Right ventricle myocardium inferior (tissue), 1 donor: ENCODE measurements at regions of chr2 and their contacts with region 1.

Region 1: DNA sequence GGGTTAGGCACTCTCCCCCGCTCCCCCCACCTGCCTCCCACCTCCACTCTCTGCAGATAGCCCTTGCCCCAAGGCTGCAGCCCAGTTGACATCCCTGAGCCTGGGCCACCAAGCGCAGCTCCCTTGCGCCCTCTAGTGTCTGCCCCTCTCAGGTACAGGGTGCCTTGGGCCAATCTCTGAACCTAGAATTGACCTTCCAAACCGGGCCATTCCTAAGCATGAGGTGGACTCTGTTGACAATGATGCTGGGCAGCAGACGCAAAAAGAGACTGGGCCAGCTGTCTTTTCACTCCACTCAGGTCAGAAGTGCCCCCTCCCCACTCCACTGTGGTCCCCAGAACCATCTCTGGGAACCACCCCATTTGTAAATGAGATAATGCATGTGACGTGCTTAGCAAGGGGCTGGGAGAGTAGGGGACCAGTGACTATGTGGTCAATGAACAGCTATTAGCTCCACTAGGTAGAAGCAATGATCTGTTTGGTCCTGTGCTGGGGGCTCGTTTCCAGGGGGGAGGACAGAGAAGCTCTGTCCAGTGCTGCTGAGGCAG is 43.3 kb upstream of the PLB1 start:
- DNase-seq: peak; percentile 91
- ATAC-seq: peak; percentile 83

Region 2: GRCh38 chr2:27703638-27704341 is 748.8 kb before region 1 on chr2:
- intact Hi-C with region 1: loop called (anchors 1 kb)
- DNase-seq: no peak
- ATAC-seq: peak; percentile 63

Region 3: GRCh38 chr2:27754138-27754588 is 698.4 kb before region 1 on chr2:
- intact Hi-C with region 1: loop called (anchors 5 kb)
- DNase-seq: peak; percentile 91
- ATAC-seq: peak; percentile 82

Region 4: DNA sequence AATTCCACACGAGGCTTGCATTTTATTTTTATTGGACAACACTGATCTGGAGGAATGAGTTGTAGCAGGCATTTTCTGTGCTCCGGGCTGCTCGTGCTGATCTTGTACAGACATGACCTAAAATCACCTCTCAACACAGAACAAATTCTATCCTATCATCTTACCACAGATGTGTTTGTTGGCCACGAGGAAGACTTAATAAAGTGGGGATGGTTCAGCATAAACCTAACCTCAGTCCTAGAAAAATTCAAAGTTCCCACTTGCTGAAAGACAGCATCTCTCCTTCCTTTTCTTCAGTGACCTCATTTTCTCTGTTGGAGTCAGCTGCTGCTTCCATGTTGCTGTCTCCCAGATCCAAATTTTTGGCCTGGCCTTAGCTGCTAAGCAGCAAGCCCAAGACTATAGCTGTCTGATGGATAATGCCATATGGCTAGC is 607.8 kb before region 1 on chr2:
- intact Hi-C with region 1: no loop called
- DNase-seq: no peak
- ATAC-seq: no peak

Region 5: GRCh38 chr2:28325567-28326468 is 126.8 kb before region 1 on chr2:
- intact Hi-C with region 1: no loop called
- DNase-seq: no peak
- ATAC-seq: no peak

Region 6: GRCh38 chr2:28437151-28437811 is 15.3 kb before region 1 on chr2:
- intact Hi-C with region 1: no loop called
- DNase-seq: no peak
- ATAC-seq: no peak